ENCODE measurements at regions of chr4 and their contacts with region 1.

Region 1: DNA sequence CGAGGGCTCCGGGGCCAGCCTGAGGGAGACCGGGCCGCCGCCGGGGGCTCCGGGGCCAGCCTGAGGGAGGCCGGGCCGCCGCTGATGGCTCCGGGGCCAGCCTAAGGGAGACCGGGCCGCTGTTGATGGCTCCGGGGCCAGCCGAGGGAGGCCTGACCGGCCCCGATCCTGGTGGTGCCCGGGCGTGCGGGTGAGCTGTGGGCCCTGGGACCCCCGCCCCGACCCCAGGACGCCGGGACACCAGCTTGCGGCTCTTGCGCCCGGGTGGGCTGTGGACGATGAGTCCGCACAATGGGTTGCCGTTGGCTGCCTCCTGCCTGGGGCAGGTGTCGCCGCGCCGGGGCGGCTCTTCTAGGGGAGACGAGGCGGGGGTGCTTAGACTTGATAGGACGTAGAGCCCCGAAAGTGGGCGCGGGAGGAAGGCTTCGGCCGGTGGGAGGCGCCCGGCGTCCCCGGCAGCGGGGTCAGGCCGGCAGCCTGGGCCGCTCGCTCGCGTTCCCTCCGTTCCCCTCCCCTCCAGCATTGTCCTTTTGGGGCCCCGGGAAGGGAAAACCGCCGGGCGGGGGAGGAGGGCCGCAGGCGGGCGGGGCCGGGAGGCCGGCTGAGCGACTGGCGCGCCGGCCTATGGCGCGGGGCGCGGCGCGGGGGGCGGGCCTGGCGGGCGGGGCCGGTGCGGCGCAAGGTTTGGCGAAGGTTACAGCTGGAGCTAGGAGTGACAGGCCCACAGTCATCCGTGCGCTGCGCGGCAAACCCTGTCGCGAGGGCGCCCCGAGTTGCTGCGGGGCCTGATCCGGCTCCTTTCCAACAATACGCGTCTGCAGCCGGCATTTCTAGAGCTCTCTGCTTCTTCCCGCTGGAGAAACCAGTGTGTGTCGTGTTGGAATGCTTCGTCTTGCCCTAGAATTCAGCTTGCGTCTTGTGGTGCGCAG is 790 bp downstream of the KIAA0232 start:
- DNase-seq: peak; percentile 75 to 81 (median 79)
- H3K4me3 ChIP-seq: peak overlapping the region; percentile 75 to 98 (median 81)
- H3K4me3 Mint-ChIP-seq: peak overlapping the region; percentile 84 to 88
- H3K27ac ChIP-seq: peak overlapping the region; percentile 88 to 92
- H3K27ac Mint-ChIP-seq: peak overlapping the region; percentile 76 to 92 (median 91)
- H3K4me1 ChIP-seq: peaks cover 30 to 46% of the 10 kb centered on the region in 2 donors
- H3K4me1 Mint-ChIP-seq: peaks cover 58% of the 10 kb centered on the region
- H3K27me3 ChIP-seq: no peaks in the 10 kb centered on the region
- H3K27me3 Mint-ChIP-seq: peaks cover 0 to 4% (median 2%) of the 10 kb centered on the region in 3 donors
- CTCF ChIP-seq: no peak

Region 2: GRCh38 chr4:6727081-6727942 is 56.0 kb before region 1 on chr4:
- intact Hi-C with region 1: loop called in 1 of 2 experiments (anchors 5 kb)
- DNase-seq: no peak
- H3K4me3 ChIP-seq: no peak overlapping the region
- H3K4me3 Mint-ChIP-seq: no peak overlapping the region
- H3K27ac ChIP-seq: no peak overlapping the region
- H3K27ac Mint-ChIP-seq: peak overlapping the region in 1 of 7 donors; percentile 52
- H3K4me1 ChIP-seq: peaks cover under 1 to 3% of the 10 kb centered on the region in 2 donors
- H3K4me1 Mint-ChIP-seq: peaks cover 3% of the 10 kb centered on the region
- H3K27me3 ChIP-seq: no peaks in the 10 kb centered on the region
- H3K27me3 Mint-ChIP-seq: peaks cover 0 to 12% (median 5%) of the 10 kb centered on the region in 3 donors
- CTCF ChIP-seq: no peak

Region 3: DNA sequence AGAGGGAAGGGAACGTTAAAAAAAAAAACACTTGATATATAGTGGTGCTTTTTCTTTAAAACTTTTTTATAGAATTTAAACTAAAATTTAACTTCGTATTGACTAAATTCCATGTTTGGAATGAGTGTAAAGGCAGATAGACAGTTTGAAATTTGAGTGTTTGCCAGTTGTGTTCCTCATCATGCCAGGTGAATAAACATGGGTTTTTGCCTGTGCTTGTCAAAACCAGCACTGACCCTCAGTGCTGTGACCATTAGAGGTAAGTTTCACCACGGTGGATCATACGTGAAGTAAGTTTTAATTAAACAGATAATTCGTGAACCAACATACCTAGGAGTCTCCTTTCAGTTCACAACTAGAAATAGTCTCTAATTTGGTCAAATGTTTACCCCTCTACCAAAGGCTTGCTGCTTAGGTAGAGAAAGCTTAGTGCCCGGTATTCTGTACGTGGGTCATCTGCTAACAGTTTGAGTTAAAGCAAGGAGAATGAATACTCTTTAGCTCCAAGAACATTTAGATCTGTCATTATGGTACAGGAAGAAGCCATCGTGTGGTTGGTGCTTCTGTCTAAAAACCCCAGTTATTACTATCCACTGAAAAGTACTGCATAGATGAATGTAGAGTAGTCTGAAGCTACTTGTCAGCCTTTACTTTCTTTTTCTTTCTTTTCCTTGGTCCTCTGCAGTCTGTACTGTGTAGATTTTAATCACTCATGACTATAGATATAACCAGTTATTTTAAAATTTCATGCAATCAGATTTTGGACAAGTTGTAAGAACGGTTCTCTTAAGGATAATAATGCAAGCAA is 31.9 kb after region 1 on chr4:
- intact Hi-C with region 1: loop called in 1 of 2 experiments (anchors 5 kb)
- DNase-seq: no peak
- H3K4me3 ChIP-seq: no peak overlapping the region
- H3K4me3 Mint-ChIP-seq: no peak overlapping the region
- H3K27ac ChIP-seq: no peak overlapping the region
- H3K27ac Mint-ChIP-seq: peak overlapping the region in 1 of 7 donors; percentile 21
- H3K4me1 ChIP-seq: peaks cover 24 to 34% of the 10 kb centered on the region in 2 donors
- H3K4me1 Mint-ChIP-seq: peaks cover 33% of the 10 kb centered on the region
- H3K27me3 ChIP-seq: no peaks in the 10 kb centered on the region
- H3K27me3 Mint-ChIP-seq: no peaks in the 10 kb centered on the region
- CTCF ChIP-seq: no peak

Region 4: GRCh38 chr4:7719354-7720174 is 936.2 kb after region 1 on chr4:
- intact Hi-C with region 1: no loop called
- DNase-seq: peak; percentile 14 to 41 (median 32)
- H3K4me3 ChIP-seq: no peak overlapping the region
- H3K4me3 Mint-ChIP-seq: no peak overlapping the region
- H3K27ac ChIP-seq: no peak overlapping the region
- H3K27ac Mint-ChIP-seq: no peak overlapping the region
- H3K4me1 ChIP-seq: peaks cover 0 to 5% of the 10 kb centered on the region in 2 donors
- H3K4me1 Mint-ChIP-seq: peaks cover 14% of the 10 kb centered on the region
- H3K27me3 ChIP-seq: peaks cover 0 to 15% of the 10 kb centered on the region in 2 donors
- H3K27me3 Mint-ChIP-seq: peaks cover 7 to 25% (median 21%) of the 10 kb centered on the region in 3 donors
- CTCF ChIP-seq: peak; percentile 91